ENCODE measurements at regions of chr14 and their contacts with region 1.

Region 1: DNA sequence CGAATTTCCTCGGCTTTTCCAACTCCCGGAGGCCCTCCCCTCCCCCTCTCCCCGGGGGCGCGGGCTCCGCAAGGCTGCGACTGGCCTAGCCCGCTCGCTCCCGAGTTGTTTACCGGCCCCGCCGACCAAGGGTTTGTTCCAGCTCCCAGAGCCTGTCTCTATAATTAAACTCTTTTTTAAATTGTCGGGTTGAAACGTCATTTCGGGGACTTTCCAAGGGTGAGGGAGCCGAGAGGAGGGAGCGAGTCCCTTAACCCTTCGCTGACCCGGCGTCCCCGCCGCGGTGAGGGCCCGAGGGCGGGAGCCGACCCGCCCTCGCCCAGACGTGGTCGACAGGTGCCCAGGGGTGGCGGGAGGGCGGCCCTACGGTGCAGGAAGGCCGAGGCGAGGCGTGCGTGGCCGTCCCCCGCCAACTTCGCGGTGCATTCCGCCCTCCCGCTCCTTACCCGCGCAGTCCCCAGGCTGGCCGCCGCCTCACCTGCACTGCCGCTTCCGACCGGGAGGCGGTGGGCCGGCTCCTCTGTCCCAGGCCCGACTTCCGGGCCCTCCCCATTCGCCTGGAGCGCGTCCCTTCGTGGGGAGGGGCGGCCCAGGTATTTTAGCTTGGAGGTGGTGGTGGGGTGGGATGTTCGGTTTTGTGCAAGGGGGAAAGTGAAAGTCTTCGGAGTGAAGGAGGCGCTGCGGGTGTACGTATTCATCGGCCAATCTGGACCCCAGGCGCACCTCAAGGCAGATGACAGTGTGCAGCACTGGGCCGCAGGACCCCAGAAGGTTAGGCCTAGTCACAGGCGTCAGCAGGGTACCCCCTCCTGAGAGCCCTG is 2.9 kb upstream of the ZFP36L1 start:
- DNase-seq: peak; percentile 87
- H3K4me3 ChIP-seq: peak overlapping the region; percentile 55 to 86 (median 70)
- H3K27ac ChIP-seq: peak overlapping the region; percentile 97 to 100 (median 98)
- H3K4me1 ChIP-seq: peaks cover 8 to 12% (median 8%) of the 10 kb centered on the region in 4 donors
- H3K27me3 ChIP-seq: no peaks in the 10 kb centered on the region
- CTCF ChIP-seq: peak; percentile 90 to 99 (median 91)
- EP300 ChIP-seq: no peak
- POLR2A ChIP-seq: peak; percentile 94

Region 2: GRCh38 chr14:67943947-67944346 is 851.9 kb before region 1 on chr14:
- in situ Hi-C with region 1: no loop called
- intact Hi-C with region 1: loop called (anchors 1 kb)
- DNase-seq: peak; percentile 75
- H3K4me3 ChIP-seq: no peak overlapping the region
- H3K27ac ChIP-seq: peak overlapping the region; percentile 78 to 85 (median 80)
- H3K4me1 ChIP-seq: peaks cover 25 to 55% (median 33%) of the 10 kb centered on the region in 4 donors
- H3K27me3 ChIP-seq: no peaks in the 10 kb centered on the region
- CTCF ChIP-seq: peak; percentile 62 to 95 (median 70)
- EP300 ChIP-seq: no peak
- POLR2A ChIP-seq: no peak

Region 3: DNA sequence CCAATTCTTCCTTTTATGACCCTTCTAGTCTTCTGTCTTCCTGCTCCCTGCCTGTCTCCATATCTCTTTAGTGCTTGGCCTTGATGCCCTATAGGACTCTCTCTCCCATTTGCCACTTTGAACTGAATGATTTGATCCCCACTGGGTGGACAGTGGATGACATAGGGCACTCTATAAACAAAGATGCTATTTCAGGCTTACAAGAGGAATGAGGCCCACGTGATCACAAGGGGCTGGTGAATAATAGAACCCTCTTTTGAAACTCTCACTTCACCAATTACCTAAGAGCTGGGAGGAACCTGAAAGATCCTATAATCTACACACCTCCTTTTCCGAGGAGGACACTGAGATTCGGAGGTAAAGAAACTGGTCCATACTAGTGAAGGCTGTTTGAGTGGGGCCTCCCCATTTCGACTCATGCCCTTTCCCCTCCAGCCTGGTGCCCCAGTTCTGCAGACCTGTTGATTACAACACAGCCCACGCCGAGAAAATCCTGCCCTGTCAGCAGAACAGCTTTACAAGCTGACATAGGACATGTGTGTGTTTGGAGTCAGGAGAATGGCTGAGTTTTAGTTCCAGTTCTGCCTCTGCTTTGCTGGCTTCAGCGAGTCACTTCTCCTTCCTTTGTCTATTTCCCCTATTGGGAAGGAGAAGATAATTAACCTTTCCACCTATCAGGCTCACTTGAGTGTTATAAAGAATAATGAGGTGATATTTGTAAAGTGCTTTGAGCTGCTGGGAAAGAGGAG is 403.2 kb before region 1 on chr14:
- in situ Hi-C with region 1: no loop called
- intact Hi-C with region 1: loop called (anchors 10 kb)
- DNase-seq: peak; percentile 51
- H3K4me3 ChIP-seq: no peak overlapping the region
- H3K27ac ChIP-seq: peak overlapping the region; percentile 60 to 78 (median 74)
- H3K4me1 ChIP-seq: peaks cover under 1 to 62% (median 20%) of the 10 kb centered on the region in 4 donors
- H3K27me3 ChIP-seq: no peaks in the 10 kb centered on the region
- CTCF ChIP-seq: no peak
- EP300 ChIP-seq: no peak
- POLR2A ChIP-seq: no peak

Measured in transverse colon (tissue), 4 donors.